ENCODE measurements at regions of chr18 and their contacts with region 1.

Region 1: DNA sequence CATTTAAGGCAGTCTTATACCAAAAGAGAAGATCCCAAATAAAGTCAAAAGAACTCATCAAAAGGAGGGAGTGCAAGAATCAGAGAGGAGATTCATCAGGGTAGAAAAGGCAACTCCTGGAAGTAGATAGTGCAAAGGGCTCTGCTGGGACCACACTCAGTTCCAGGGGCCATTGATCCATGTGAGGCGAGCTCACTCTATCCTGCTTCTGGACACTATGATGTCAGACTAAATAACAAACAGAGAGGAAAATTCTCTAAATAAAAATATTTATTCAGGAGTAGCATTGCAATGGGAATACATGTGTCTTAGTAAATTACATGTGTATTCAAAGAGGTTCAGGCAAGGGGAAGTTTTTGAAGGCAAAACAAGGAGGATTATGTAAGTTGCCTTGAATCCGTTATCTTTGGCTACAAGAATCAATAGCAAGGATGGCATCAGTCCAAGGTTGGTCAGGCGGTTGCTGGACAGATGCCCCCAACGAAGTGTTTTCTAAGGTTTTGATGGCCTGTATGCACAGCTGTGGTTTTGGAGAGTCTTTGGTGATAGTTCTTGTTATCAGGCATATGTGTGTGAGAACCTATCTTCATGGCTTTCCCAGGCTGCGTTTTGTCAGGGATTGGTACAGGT is 13.2 kb upstream of the SERPINB12 start:
- DNase-seq: no peak
- H3K4me3 ChIP-seq: no peak overlapping the region
- H3K27ac ChIP-seq: no peak overlapping the region
- H3K27me3 ChIP-seq: no peaks in the 10 kb centered on the region
- CTCF ChIP-seq: no peak

Region 2: DNA sequence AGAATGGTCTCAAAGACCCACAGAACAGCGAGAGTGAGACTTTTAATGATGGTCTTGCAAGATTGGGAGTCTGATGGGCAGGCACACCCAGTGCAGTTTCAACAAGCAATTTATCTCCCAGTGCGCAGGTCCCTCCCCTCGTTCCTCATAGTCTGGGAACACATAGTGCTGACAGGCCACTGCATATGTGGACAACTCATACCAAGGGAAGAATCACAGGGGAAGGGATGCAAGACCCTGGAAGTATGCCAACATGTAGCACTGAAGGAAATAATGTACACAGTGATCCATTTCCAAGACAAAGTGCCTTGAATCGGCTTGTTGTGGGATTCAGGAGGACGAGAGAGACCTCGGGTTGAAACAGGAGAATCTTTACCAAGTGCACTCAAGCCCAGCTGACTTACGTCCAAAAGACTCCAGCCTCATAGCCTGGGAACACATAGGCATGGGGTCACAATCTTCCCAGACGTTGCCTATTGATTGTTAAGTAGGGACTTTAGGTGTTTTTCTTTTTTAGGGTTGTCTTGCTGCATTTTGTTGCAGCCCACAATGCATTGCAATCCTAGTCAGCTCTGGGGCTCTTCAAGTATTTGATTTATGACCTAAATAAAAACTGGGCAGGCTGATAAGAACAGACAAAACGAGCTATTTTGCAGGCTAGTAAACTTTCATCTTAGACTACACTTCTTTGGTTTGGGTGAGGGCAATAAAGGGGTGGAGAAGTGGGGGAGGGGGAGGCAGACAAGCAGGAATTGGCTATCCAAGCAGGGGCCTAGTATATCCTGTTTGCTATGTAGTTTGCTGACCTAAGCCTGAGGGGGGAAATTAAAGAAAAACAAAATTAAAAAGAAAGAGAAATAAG is 76.9 kb before region 1 on chr18:
- intact Hi-C with region 1: no loop called
- DNase-seq: no peak
- H3K4me3 ChIP-seq: no peak overlapping the region
- H3K27ac ChIP-seq: no peak overlapping the region
- H3K27me3 ChIP-seq: no peaks in the 10 kb centered on the region
- CTCF ChIP-seq: no peak

Region 3: DNA sequence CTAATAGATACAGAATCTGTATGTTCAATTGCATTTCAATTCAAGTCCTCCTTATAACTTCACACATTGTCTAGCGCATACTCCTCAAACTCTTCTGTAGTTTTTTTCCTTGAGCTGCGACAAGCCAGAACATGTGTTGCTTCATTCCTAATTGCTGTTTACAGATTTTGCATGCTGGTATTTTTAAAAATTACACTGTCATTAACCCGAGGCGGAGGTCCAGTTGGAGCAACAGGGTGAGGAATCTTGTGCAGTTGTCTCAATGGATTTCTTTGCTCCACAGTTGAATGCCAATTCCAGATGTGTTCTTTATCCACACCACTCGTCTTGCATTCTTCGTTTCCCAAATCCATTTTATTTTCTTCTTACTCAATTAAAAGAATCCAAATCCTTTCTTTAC is 41.7 kb after region 1 on chr18:
- intact Hi-C with region 1: loop called in 1 of 2 experiments (anchors 5 kb)
- DNase-seq: no peak
- H3K4me3 ChIP-seq: no peak overlapping the region
- H3K27ac ChIP-seq: no peak overlapping the region
- H3K27me3 ChIP-seq: peaks cover 0 to 7% (median 0%) of the 10 kb centered on the region in 45 donors
- CTCF ChIP-seq: no peak

Region 4: GRCh38 chr18:63590373-63590772 is 61.4 kb after region 1 on chr18:
- intact Hi-C with region 1: no loop called
- DNase-seq: no peak
- H3K4me3 ChIP-seq: no peak overlapping the region
- H3K27ac ChIP-seq: no peak overlapping the region
- H3K27me3 ChIP-seq: no peaks in the 10 kb centered on the region
- CTCF ChIP-seq: no peak

Region 5: GRCh38 chr18:63648241-63648640 is 119.3 kb after region 1 on chr18:
- intact Hi-C with region 1: no loop called
- DNase-seq: no peak
- H3K4me3 ChIP-seq: no peak overlapping the region
- H3K27ac ChIP-seq: no peak overlapping the region
- H3K27me3 ChIP-seq: peaks cover 0 to 4% (median 0%) of the 10 kb centered on the region in 45 donors
- CTCF ChIP-seq: no peak

Region 6: DNA sequence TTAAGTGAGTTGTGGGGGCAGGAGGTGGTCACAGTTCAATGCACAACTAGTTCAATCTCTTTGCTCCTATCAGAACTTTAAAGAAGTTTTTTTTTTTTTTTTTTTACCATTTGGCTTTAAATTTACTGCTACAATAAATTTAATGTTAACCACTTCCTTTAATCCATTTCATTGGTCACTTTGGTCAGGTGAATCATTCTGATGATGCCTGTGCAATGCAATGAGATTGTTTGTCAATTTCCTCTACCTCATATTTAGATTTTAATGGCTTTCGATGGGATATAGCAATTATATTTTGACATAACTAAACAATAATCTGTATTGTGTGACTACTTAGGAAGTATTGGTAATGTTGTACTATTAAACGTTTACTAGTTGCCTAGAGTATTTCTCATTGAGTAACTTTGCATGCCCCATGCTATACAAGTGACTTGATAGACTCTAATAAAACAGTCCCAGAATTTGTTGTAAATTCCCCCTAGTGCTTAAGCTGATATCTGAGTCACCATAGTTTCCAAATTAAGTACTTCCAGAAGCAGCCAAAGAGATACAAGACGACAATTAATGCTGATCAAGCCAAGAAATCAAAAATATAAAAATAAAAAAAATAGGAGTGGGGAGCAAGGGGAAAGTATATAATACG is 305.6 kb after region 1 on chr18:
- intact Hi-C with region 1: no loop called
- DNase-seq: no peak
- H3K4me3 ChIP-seq: no peak overlapping the region
- H3K27ac ChIP-seq: no peak overlapping the region
- H3K27me3 ChIP-seq: peaks cover 0 to 7% (median 0%) of the 10 kb centered on the region in 45 donors
- CTCF ChIP-seq: no peak

Measured in dorsolateral prefrontal cortex (tissue), 120 donors.